A673 (cell line): ENCODE measurements at regions of chr17 and their contacts with region 1.

Region 1: DNA sequence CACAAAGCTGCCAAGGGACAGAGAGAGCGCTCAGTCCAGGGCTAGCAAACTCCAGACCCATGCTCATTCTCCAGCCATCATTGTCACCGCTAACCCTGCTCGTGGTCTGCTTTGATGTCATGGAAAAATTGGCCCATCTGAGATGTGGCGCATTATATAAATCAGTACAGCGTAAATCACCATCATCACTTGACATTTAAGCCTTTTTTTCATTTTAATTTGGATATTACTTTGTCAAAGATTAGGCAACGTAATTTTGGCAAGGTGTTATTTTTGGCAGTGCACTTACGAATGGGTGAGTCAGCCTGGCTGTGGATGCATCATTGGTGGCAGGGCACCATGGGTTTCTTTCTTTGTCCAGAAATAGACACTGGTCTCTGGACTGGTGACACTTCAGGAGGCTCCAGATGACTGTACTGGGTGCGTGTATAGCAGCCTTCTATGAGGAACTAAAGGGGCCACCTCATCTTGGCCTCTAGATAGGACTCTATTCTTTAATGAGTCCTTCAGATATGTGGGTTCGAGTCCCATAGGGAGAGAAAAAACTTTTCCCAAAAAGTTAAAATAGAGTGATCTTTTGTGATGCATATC is 166.3 kb downstream of the MSI2 start:
- DNase-seq: no peak
- H3K4me3 ChIP-seq: no peak overlapping the region
- H3K27ac ChIP-seq: no peak overlapping the region
- H3K4me1 ChIP-seq: peaks cover 68% of the 10 kb centered on the region
- H3K27me3 ChIP-seq: no peaks in the 10 kb centered on the region
- CTCF ChIP-seq: no peak

Region 2: GRCh38 chr17:57381498-57381897 is 41.2 kb before region 1 on chr17:
- CTCF ChIA-PET with region 1: no interaction called
- POLR2A ChIA-PET with region 1: no interaction called
- intact Hi-C with region 1: no loop called
- DNase-seq: no peak
- H3K4me3 ChIP-seq: no peak overlapping the region
- H3K27ac ChIP-seq: no peak overlapping the region
- H3K4me1 ChIP-seq: peaks cover 11% of the 10 kb centered on the region
- H3K27me3 ChIP-seq: no peaks in the 10 kb centered on the region
- CTCF ChIP-seq: no peak

Region 3: DNA sequence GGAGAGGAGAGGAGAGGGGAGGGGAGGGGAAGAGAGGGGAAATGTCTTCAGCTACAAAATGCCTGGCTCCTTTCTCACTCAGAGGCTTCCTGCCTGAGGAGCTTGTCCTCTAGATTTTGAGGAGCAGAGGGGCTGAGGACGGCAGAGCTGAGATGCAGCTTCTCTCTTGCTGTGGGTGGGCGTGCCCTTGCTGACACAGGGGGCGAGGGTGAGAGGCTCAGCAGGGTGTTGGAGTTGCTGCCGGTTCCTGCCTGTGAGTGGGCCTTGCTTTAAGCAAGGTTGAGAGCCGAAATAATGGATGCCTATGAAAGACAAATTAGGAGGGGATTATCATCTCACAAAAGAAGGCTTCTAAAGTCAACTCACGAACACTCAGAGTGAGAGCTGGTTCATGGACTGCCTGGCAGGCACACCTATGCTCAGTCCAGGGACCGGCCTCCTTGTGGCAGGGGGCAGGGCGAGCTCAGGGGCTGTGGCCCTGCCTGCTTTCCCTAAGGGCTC is 49.2 kb after region 1 on chr17:
- CTCF ChIA-PET with region 1: no interaction called
- POLR2A ChIA-PET with region 1: no interaction called
- intact Hi-C with region 1: loop called (anchors 5 kb)
- DNase-seq: peak; percentile 22
- H3K4me3 ChIP-seq: no peak overlapping the region
- H3K27ac ChIP-seq: peak overlapping the region; percentile 59
- H3K4me1 ChIP-seq: peaks cover 46% of the 10 kb centered on the region
- H3K27me3 ChIP-seq: no peaks in the 10 kb centered on the region
- CTCF ChIP-seq: no peak

Region 4: DNA sequence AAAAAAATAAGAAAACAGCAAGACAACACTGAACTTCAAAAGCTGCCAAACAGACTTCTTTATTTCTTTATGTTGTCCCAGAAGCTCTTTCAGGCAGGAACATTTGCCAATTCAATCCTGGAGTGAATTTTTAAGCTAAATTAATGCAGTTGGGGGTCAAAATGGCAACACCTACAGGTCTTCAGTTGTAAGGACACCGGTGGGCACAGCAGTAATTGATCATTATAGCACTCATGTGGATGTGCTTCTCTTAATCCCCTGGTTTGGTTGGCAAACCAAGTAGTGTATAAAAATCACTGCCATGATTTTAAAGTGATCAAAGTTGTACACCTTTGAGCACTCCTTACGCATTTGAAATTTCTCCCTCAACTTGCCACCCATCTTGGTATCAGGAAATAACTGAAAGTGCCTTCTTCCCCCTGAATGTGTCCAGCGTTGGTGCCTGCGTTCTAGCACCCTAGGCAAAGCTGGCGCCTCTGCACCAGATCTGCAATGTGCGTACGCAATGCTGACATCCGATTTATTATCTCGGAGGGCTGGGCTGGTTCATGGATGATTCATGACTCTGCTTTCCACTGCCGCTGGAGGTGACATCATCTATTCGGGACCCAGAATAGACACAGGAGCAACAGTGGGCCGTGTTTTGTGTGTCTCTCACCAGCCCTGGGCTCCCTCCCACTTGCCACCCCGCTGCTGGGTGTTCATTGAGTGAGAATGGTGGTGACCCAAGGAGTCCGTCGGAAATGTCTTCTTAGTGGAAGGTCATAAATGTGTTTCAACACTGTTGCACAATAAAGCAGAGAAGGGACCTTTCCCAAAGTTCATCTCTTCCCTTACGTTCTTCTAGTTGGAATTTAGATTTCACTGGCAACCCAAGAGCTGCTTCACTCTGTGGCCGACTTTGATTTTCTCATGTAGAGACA is 119.1 kb after region 1 on chr17:
- CTCF ChIA-PET with region 1: no interaction called
- POLR2A ChIA-PET with region 1: no interaction called
- intact Hi-C with region 1: loop called (anchors 10 kb)
- DNase-seq: peak; percentile 84
- H3K4me3 ChIP-seq: no peak overlapping the region
- H3K27ac ChIP-seq: no peak overlapping the region
- H3K4me1 ChIP-seq: peaks cover 72% of the 10 kb centered on the region
- H3K27me3 ChIP-seq: no peaks in the 10 kb centered on the region
- CTCF ChIP-seq: no peak

Region 5: GRCh38 chr17:57548421-57549410 is 126.0 kb after region 1 on chr17:
- CTCF ChIA-PET with region 1: interaction called, 12 read pairs
- POLR2A ChIA-PET with region 1: no interaction called
- intact Hi-C with region 1: loop called (anchors 10 kb)
- DNase-seq: peak; percentile 99
- H3K4me3 ChIP-seq: no peak overlapping the region
- H3K27ac ChIP-seq: peak overlapping the region; percentile 60
- H3K4me1 ChIP-seq: peaks cover 96% of the 10 kb centered on the region
- H3K27me3 ChIP-seq: no peaks in the 10 kb centered on the region
- CTCF ChIP-seq: no peak

Region 6: GRCh38 chr17:57597531-57598453 is 175.1 kb after region 1 on chr17:
- CTCF ChIA-PET with region 1: no interaction called
- POLR2A ChIA-PET with region 1: no interaction called
- intact Hi-C with region 1: no loop called
- DNase-seq: peak; percentile 85
- H3K4me3 ChIP-seq: no peak overlapping the region
- H3K27ac ChIP-seq: no peak overlapping the region
- H3K4me1 ChIP-seq: peaks cover 10% of the 10 kb centered on the region
- H3K27me3 ChIP-seq: no peaks in the 10 kb centered on the region
- CTCF ChIP-seq: peak; percentile 92

Region 7: GRCh38 chr17:57810721-57811637 is 388.3 kb after region 1 on chr17:
- CTCF ChIA-PET with region 1: no interaction called
- POLR2A ChIA-PET with region 1: no interaction called
- intact Hi-C with region 1: loop called (anchors 10 kb)
- DNase-seq: peak; percentile 98
- H3K4me3 ChIP-seq: peak overlapping the region; percentile 13
- H3K27ac ChIP-seq: peak overlapping the region; percentile 45
- H3K4me1 ChIP-seq: peaks cover 43% of the 10 kb centered on the region
- H3K27me3 ChIP-seq: peaks cover 6% of the 10 kb centered on the region
- CTCF ChIP-seq: no peak; the same call in 1 of the 2 replicates